HEK293 (cell line): ENCODE measurements at regions of chr12 and their contacts with region 1.

Region 1: GRCh38 chr12:68317047-68317667 is 15.0 kb downstream of the MDM1 start:
- H3K4me3 ChIP-seq: no peak overlapping the region
- H3K27ac ChIP-seq: no peak overlapping the region
- H3K4me1 ChIP-seq: no peaks in the 10 kb centered on the region
- CTCF ChIP-seq: 0 out of 2 replicates have a peak, but pooled peaks have one; percentile 9

Region 2: DNA sequence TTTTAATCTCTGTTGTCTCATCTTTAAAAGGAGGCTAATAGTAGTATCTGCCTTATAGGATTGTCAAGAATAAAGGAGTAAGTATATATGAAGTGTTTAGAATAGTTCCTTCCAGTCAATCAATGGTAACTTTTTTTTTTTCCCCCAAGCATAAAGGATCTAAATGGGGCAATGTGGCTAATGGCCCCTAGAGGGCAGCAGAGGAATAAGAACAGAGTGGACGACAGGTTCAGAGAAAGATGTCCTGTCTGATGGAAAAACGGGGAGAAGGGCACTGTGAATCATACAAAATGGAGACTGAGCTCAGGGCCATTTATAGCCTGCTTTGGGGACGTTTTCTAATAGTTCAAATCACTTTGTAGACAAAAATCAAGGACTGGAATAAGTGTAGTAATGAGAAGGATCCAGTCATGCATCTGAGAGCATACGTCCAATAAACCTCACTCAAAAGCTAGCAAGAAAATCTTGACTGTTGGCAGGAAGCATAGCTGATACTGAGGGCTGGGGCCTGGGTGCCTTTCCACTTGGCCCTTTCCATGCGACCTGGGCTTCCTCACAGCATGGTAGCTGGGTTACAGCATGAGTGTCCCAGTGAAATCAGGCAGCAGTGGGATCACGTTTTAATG is 276.6 kb before region 1 on chr12:
- CTCF ChIA-PET with region 1: interaction called, 43 read pairs
- POLR2A ChIA-PET with region 1: interaction called, 4 read pairs
- H3K4me3 ChIP-seq: no peak overlapping the region
- H3K27ac ChIP-seq: no peak overlapping the region
- H3K4me1 ChIP-seq: no peaks in the 10 kb centered on the region
- CTCF ChIP-seq: peak; percentile 68

Region 3: GRCh38 chr12:68303850-68304249 is 13.3 kb before region 1 on chr12:
- CTCF ChIA-PET with region 1: interaction called, 15 read pairs
- POLR2A ChIA-PET with region 1: no interaction called
- H3K4me3 ChIP-seq: no peak overlapping the region
- H3K27ac ChIP-seq: no peak overlapping the region
- H3K4me1 ChIP-seq: no peaks in the 10 kb centered on the region
- CTCF ChIP-seq: no peak